ENCODE measurements at regions of chr19 and their contacts with region 1.

Region 1: GRCh38 chr19:30784850-30785457 is 412.8 kb downstream of the ZNF536 start:
- DNase-seq: peak; percentile 35 to 39
- ATAC-seq: peak in 4 of 8 donors; percentile 37 to 66 (median 54)
- H3K4me3 ChIP-seq: no peak overlapping the region
- H3K27ac ChIP-seq: no peak overlapping the region
- H3K4me1 ChIP-seq: peaks cover 0 to 3% (median 0%) of the 10 kb centered on the region in 9 donors
- H3K27me3 ChIP-seq: peaks cover 0 to 14% (median 0%) of the 10 kb centered on the region in 7 donors
- CTCF ChIP-seq: peak; percentile 30 to 73 (median 56)

Region 2: GRCh38 chr19:30739394-30739793 is 45.6 kb before region 1 on chr19:
- intact Hi-C with region 1: no loop called
- DNase-seq: no peak
- ATAC-seq: peak in 1 of 8 donors; percentile 59
- H3K4me3 ChIP-seq: no peak overlapping the region
- H3K27ac ChIP-seq: no peak overlapping the region
- H3K4me1 ChIP-seq: no peaks in the 10 kb centered on the region
- H3K27me3 ChIP-seq: peaks cover 0 to 28% (median 3%) of the 10 kb centered on the region in 7 donors
- CTCF ChIP-seq: no peak

Region 3: GRCh38 chr19:31350701-31351068 is 565.7 kb after region 1 on chr19:
- intact Hi-C with region 1: loop called in 2 of 10 experiments (anchors 5 to 10 kb)
- DNase-seq: peak; percentile 65 to 66
- ATAC-seq: peak; percentile 26 to 50 (median 44)
- H3K4me3 ChIP-seq: peak overlapping the region; percentile 77 to 100 (median 92)
- H3K27ac ChIP-seq: peak overlapping the region; percentile 78 to 98 (median 94)
- H3K4me1 ChIP-seq: peaks cover 6 to 53% (median 21%) of the 10 kb centered on the region in 9 donors
- H3K27me3 ChIP-seq: peaks cover 0 to 67% (median 40%) of the 10 kb centered on the region in 7 donors
- CTCF ChIP-seq: no peak

Region 4: DNA sequence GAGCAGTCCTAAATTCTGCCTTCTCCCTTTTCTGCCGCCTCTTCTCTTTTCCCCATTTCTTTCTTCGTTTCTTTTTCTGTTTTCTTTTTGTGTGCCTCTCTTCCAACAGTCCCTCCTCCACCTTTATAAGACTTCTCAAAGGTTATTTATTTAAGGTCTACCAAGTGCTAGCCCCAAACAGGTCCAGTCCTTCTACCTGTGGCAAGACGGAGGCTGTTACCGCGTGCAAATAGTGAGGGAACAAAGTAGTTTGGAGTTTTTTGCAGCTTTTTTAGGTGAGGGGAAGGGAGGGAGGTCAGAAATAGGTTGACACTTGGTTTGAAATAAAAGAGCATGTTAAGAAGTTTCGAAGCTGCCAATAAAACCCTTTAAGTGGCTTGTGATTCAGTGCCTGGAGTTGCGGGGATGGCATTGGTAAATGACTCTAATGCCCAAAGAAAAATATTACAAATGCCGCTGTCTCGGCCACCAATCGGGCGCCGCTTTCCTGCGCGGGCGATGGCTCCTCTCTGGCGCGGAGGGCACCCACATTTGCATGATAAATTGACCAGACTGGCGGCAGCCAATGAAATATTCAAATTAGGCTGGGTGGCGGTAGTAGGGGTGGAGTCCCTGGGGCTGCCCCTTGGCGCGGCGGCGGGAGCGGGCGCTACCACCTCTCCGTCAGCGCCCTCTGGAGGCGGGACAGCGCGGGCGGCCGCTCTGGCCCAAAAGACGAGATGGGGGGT is 571.8 kb after region 1 on chr19:
- intact Hi-C with region 1: loop called in 2 of 10 experiments (anchors 5 to 10 kb)
- DNase-seq: peak in 1 of 2 donors; percentile 51
- ATAC-seq: peak in 6 of 8 donors; percentile 9 to 61 (median 45)
- H3K4me3 ChIP-seq: peak overlapping the region in 2 of 10 donors; percentile 8 to 13
- H3K27ac ChIP-seq: no peak overlapping the region
- H3K4me1 ChIP-seq: peaks cover 3 to 42% (median 10%) of the 10 kb centered on the region in 9 donors
- H3K27me3 ChIP-seq: peaks cover 0 to 74% (median 62%) of the 10 kb centered on the region in 7 donors
- CTCF ChIP-seq: peak; percentile 24 to 68 (median 58)